A673 (cell line): ENCODE measurements at regions of chr17 and their contacts with region 1.

Region 1: GRCh38 chr17:49053171-49053829 is 56.1 kb downstream of the IGF2BP1 start:
- DNase-seq: no peak
- H3K4me3 ChIP-seq: no peak overlapping the region
- H3K27ac ChIP-seq: peak overlapping the region; percentile 52
- H3K4me1 ChIP-seq: no peaks in the 10 kb centered on the region
- H3K27me3 ChIP-seq: no peaks in the 10 kb centered on the region
- CTCF ChIP-seq: no peak

Region 2: DNA sequence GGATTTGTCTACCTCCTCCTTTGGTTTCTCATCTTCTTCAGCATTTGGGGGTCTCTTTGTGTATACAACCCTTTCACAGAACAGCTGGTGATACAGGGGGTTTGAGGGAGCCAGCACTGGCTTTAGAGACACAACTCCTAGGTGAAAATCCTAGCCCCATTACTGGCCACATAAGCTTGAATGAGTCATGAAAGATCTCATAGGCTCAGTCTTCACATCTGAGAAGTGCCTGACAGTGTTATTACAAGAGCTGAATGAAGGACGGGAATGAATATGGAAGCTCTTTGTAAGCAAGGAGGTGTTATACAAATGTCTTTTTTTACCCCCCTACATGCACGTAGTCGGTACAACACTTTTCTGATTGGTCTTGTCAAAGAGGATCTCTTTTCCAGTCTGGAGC is 77.6 kb after region 1 on chr17:
- CTCF ChIA-PET with region 1: no interaction called
- POLR2A ChIA-PET with region 1: interaction called, 16 read pairs
- intact Hi-C with region 1: no loop called
- DNase-seq: no peak
- H3K4me3 ChIP-seq: no peak overlapping the region
- H3K27ac ChIP-seq: no peak overlapping the region
- H3K4me1 ChIP-seq: no peaks in the 10 kb centered on the region
- H3K27me3 ChIP-seq: peaks cover 27% of the 10 kb centered on the region
- CTCF ChIP-seq: no peak

Region 3: GRCh38 chr17:49290690-49291359 is 237.5 kb after region 1 on chr17:
- CTCF ChIA-PET with region 1: interaction called, 10 read pairs
- POLR2A ChIA-PET with region 1: no interaction called
- intact Hi-C with region 1: loop called (anchors 10 kb)
- DNase-seq: peak; percentile 76
- H3K4me3 ChIP-seq: no peak overlapping the region
- H3K27ac ChIP-seq: peak overlapping the region; percentile 44
- H3K4me1 ChIP-seq: peaks cover 11% of the 10 kb centered on the region
- H3K27me3 ChIP-seq: no peaks in the 10 kb centered on the region
- CTCF ChIP-seq: peak; percentile 88